ENCODE measurements at regions of chr1 and their contacts with region 1.

Region 1: GRCh38 chr1:150072959-150073358 is 5.4 kb downstream of the VPS45 start:
- DNase-seq: no peak
- ATAC-seq: peak; percentile 53; the same call in 1 of the 2 replicates
- H3K4me3 ChIP-seq: no peak overlapping the region
- H3K27ac ChIP-seq: no peak overlapping the region
- H3K4me1 ChIP-seq: no peaks in the 10 kb centered on the region
- H3K27me3 ChIP-seq: no peaks in the 10 kb centered on the region
- CTCF ChIP-seq: peak; percentile 40; the same call in 1 of the 2 replicates

Region 2: GRCh38 chr1:150168960-150169601 is 96.1 kb after region 1 on chr1:
- CTCF ChIA-PET with region 1: interaction called, 4 read pairs
- POLR2A ChIA-PET with region 1: no interaction called
- in situ Hi-C with region 1: no loop called
- intact Hi-C with region 1: loop called (anchors 1 kb)
- DNase-seq: peak; percentile 39
- ATAC-seq: peak; percentile 81
- H3K4me3 ChIP-seq: no peak overlapping the region
- H3K27ac ChIP-seq: no peak overlapping the region
- H3K4me1 ChIP-seq: no peaks in the 10 kb centered on the region
- H3K27me3 ChIP-seq: no peaks in the 10 kb centered on the region
- CTCF ChIP-seq: peak; percentile 92

Region 3: GRCh38 chr1:150186789-150187559 is 114.0 kb after region 1 on chr1:
- CTCF ChIA-PET with region 1: interaction called, 11 read pairs
- POLR2A ChIA-PET with region 1: no interaction called
- in situ Hi-C with region 1: no loop called
- intact Hi-C with region 1: loop called (anchors 5 kb)
- DNase-seq: peak; percentile 28
- ATAC-seq: peak; percentile 86
- H3K4me3 ChIP-seq: no peak overlapping the region
- H3K27ac ChIP-seq: no peak overlapping the region
- H3K4me1 ChIP-seq: peaks cover 5% of the 10 kb centered on the region; the same call in 1 of the 2 replicates
- H3K27me3 ChIP-seq: no peaks in the 10 kb centered on the region
- CTCF ChIP-seq: peak; percentile 77

Measured in Panc1 (cell line).